ENCODE measurements at regions of chr1 and their contacts with region 1.

Region 1: GRCh38 chr1:58783993-58784757 is at the start of gene JUN:
- DNase-seq: peak; percentile 96
- H3K4me3 Mint-ChIP-seq: peak within 1 kb of the TSS; percentile 91
- H3K27ac Mint-ChIP-seq: peak within 1 kb of the TSS; percentile 93
- H3K4me1 Mint-ChIP-seq: peaks cover 21% of the 10 kb centered on the region
- H3K27me3 Mint-ChIP-seq: peaks cover 16% of the 10 kb centered on the region
- total RNA-seq, gene JUN: 29.5 and 30.2 TPM in 2 replicates

Region 2: DNA sequence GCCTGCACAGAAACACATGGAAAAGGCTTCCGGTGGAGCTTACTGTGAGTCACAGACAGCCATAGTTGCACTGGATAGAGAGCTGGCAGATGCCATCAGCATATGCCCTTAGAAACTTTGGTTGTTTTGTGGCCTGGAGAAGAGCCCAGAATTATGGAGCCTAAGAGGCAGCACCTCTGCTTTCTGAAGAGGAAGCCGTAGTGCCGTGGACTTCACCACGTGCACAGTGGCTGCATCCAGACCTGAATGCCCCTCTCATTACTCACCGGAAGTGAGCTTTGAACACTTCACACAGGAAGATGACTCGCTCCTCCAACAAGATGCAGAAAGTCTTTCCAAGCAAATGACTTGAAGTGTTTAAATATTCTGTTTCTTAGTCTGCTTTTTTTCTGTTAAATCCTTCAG is 28.7 kb before region 1 on chr1:
- intact Hi-C with region 1: loop called (anchors 2 kb)
- DNase-seq: peak; percentile 30
- H3K4me3 Mint-ChIP-seq: peak overlapping the region; percentile 46
- H3K27ac Mint-ChIP-seq: peak overlapping the region; percentile 86
- H3K4me1 Mint-ChIP-seq: peaks cover 60% of the 10 kb centered on the region
- H3K27me3 Mint-ChIP-seq: no peaks in the 10 kb centered on the region

Region 3: DNA sequence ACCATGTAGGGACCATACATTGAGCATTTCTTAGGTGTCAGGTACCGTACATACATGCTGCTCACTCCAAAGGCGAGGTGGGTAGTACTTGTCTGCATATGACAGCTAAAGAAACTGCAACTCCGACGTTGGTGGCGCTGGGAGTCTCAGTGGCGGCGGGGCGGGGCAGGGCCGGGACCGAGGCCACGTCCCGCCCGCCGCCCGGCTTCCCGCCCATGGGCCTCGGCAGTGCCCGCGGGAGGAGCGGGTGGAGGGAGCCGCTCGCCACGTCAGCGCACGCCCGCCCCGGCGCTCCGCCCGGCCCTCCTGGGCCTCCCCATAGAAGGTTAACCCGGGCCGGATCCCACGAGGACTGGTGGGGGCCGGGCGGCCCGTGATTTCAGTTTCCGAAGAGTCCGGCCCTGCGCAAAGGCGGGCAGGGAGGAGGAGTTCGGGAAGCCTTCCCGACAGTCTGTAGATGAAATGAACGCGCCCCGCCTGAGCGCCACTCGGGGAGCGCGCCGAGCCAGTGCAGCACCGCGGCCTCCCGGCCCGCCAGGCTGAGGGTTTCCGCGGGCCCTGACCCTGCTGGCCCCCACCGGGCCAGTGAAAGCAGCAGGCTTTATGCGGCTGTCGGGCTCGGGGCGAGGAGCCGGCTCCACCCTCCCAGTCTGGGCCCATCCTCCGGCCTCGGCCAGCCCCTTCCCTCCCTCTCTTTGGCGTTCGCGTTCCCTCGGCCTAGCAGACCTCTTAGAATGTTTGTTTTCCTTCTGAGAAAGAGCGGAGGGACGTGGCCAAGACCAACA is 119.5 kb after region 1 on chr1:
- intact Hi-C with region 1: loop called (anchors 1 kb)
- DNase-seq: peak; percentile 78
- H3K4me3 Mint-ChIP-seq: peak overlapping the region; percentile 71
- H3K27ac Mint-ChIP-seq: peak overlapping the region; percentile 79
- H3K4me1 Mint-ChIP-seq: peaks cover 27% of the 10 kb centered on the region
- H3K27me3 Mint-ChIP-seq: peaks cover 5% of the 10 kb centered on the region

Region 4: DNA sequence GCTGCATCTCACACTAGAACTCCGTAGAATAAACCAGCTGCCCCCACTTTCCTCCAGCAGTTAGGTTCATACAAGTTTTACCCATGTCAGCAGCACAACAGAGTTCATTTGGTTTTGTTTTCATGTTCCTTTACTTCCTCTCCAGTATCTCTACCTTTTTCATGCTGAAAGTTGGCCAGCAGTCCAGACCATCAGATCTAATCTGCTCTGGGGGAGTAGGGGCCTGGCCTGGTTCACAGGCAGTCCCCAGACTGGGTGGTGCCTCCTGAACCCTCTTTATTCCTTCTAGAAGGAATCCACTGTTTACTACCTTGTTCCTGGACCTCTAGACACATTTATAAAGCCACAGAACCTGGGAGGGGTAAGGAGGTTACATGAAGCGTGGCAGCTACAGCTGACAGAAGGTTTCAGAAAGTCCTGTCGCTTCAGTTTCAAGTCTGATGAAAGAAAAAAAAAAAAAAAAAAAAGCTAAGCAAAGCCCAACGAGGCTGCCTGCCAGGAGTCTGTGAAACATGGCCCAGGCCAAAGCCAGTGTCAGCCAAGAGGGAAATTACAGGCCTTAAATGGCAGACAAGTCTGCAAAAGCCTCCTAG is 184.3 kb after region 1 on chr1:
- intact Hi-C with region 1: no loop called
- DNase-seq: peak; percentile 43
- H3K4me3 Mint-ChIP-seq: peak overlapping the region; percentile 31
- H3K27ac Mint-ChIP-seq: peak overlapping the region; percentile 98
- H3K4me1 Mint-ChIP-seq: peaks cover 40% of the 10 kb centered on the region
- H3K27me3 Mint-ChIP-seq: no peaks in the 10 kb centered on the region

Region 5: GRCh38 chr1:59046730-59047157 is 262.6 kb after region 1 on chr1:
- intact Hi-C with region 1: loop called (anchors 5 kb)
- DNase-seq: peak; percentile 40
- H3K4me3 Mint-ChIP-seq: peak overlapping the region; percentile 40
- H3K27ac Mint-ChIP-seq: peak overlapping the region; percentile 90
- H3K4me1 Mint-ChIP-seq: peaks cover 52% of the 10 kb centered on the region
- H3K27me3 Mint-ChIP-seq: no peaks in the 10 kb centered on the region

Region 6: DNA sequence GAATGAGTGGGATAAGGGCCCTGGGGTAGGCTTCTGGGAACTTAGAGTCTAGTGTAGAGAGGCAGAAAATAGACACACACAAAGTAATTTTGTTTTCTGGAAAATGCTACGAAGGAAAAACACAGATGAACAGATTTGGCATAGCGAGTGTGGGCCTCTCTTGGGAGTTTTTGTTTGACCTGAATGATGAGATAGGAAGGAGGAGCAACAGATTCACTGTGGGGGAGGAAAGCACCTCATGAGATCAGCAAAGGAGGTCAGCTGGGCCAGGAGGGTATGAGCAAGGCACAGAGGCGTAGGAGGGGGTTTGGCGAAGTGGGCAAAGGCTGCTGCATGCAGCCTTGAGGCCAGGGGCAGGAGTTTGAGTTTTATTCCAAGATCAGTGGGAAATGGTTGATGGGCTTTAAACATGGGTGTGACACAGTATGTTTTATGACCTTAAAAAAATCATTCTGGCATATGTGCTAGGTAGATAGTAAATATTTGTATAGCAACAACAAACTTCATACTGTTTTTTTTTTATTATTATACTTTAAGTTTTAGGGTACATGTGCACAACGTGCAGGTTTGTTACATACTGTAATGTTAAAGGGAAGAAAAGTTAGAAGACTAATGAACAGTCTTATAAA is 570.6 kb after region 1 on chr1:
- intact Hi-C with region 1: loop called (anchors 2 kb)
- DNase-seq: no peak
- H3K4me3 Mint-ChIP-seq: peak overlapping the region; percentile 32
- H3K27ac Mint-ChIP-seq: peak overlapping the region; percentile 95
- H3K4me1 Mint-ChIP-seq: peaks cover 37% of the 10 kb centered on the region
- H3K27me3 Mint-ChIP-seq: no peaks in the 10 kb centered on the region

Measured in activated T-helper 2 cell treated with anti-CD3 and anti-CD28 coated beads, Interferon-gamma antibody, Interleukin-2, Interleukin-4, amounts not matched to agents 10 μg/mL and 5 μg/mL and 100 μg/mL, durations not matched to agents 14 hours and 24 hours and 36 hours (primary cell).